ENCODE measurements at regions of chr15 and their contacts with region 1.

Region 1: DNA sequence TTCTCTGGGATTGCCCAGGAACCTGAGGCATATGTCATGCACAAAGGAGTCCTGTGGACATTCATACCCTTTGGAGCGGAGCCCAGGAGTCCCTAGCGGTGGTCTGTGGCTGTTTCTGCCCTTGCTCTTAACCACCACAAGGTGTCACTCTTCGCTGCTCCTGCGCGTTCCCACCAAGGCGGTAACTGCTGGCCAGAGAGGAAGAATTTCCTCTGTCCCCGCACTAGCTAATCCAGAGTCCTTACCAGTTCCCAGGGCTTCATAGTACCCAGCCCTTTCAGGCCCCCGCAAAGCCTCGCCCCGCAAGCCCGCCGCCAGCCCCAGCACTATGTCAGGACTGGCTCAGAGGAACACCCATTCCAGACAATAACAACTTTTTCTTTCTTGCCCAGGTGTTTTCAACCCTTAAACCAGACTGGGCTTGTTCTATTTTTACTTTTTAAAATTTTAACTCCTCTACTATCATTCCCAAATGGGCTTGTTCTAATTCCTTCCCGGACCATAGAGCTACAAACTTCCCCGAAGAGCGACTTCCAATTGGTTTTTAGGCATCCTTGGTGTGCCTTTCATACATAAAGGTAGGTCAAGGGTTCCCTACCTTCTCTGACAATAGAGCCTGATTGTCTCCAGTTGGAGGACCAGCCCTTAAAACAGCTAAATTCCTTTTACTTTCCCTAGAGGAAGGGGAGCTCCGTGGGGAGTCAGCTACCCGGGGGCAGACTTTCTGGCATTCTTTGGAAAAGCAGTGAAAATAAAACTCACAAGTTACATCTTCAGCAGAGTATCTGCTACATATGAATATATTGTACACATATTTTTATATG is 31.8 kb upstream of the ZNF774 start:
- DNase-seq: peak; percentile 80
- ATAC-seq: peak; percentile 99
- H3K4me3 Mint-ChIP-seq: peak overlapping the region; percentile 9
- H3K27ac Mint-ChIP-seq: no peak overlapping the region
- H3K4me1 Mint-ChIP-seq: peaks cover 7% of the 10 kb centered on the region
- H3K27me3 Mint-ChIP-seq: peaks cover 2% of the 10 kb centered on the region

Region 2: GRCh38 chr15:90300988-90301706 is 19.1 kb before region 1 on chr15:
- CTCF ChIA-PET with region 1: interaction called, 46 read pairs
- POLR2A ChIA-PET with region 1: no interaction called
- DNase-seq: peak; percentile 70
- ATAC-seq: peak; percentile 76
- H3K4me3 Mint-ChIP-seq: no peak overlapping the region
- H3K27ac Mint-ChIP-seq: no peak overlapping the region
- H3K4me1 Mint-ChIP-seq: peaks cover 25% of the 10 kb centered on the region
- H3K27me3 Mint-ChIP-seq: peaks cover 5% of the 10 kb centered on the region

Region 3: GRCh38 chr15:90345857-90346256 is 25.6 kb after region 1 on chr15:
- CTCF ChIA-PET with region 1: interaction called, 17 read pairs
- POLR2A ChIA-PET with region 1: no interaction called
- DNase-seq: no peak
- ATAC-seq: no peak
- H3K4me3 Mint-ChIP-seq: no peak overlapping the region
- H3K27ac Mint-ChIP-seq: no peak overlapping the region
- H3K4me1 Mint-ChIP-seq: peaks cover 22% of the 10 kb centered on the region
- H3K27me3 Mint-ChIP-seq: peaks cover 16% of the 10 kb centered on the region

Region 4: GRCh38 chr15:90412356-90413194 is 92.3 kb after region 1 on chr15:
- CTCF ChIA-PET with region 1: interaction called, 15 read pairs
- POLR2A ChIA-PET with region 1: no interaction called
- DNase-seq: peak; percentile 54
- ATAC-seq: peak; percentile 57
- H3K4me3 Mint-ChIP-seq: peak overlapping the region; percentile 37
- H3K27ac Mint-ChIP-seq: peak overlapping the region; percentile 74
- H3K4me1 Mint-ChIP-seq: peaks cover 78% of the 10 kb centered on the region
- H3K27me3 Mint-ChIP-seq: no peaks in the 10 kb centered on the region

Region 5: DNA sequence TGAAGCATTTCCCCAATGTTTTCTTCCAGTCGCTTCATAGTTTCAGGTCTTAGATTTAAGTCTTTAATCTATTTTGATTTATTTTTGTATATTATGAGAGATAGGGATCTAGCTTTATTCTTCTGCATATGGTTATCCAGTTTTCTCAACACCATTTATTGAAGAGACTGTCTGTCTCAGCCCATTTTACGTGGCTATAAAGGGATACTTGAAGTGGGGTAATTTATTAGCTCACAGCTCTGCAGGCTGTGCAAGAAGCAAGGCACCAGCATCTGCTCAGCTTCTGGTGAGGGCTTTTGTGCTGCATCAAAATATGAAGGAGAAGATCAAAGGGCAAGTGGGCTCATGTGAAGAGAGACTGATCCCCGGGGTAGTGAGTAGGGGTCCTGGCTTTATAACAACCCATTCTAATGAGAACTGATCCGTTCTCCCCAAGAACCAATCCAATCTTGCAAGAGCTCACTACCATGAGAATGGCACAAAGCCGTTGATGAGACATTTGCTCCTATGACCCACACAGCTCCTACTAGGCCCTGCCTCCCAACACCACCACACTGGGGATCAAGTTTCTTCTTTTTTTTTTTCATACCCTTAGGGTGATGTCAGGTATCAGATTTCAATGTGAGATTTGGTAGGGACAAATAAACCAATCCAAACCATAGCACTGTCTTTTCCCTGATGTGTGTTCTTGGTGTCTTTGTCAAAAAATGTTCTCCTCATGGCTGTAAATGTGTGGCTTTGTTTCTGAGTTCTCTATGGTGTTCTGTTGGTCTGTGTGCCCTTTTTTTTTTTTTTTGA is 131.0 kb after region 1 on chr15:
- CTCF ChIA-PET with region 1: interaction called, 32 read pairs
- POLR2A ChIA-PET with region 1: no interaction called
- DNase-seq: no peak
- ATAC-seq: no peak
- H3K4me3 Mint-ChIP-seq: no peak overlapping the region
- H3K27ac Mint-ChIP-seq: no peak overlapping the region
- H3K4me1 Mint-ChIP-seq: peaks cover 11% of the 10 kb centered on the region
- H3K27me3 Mint-ChIP-seq: no peaks in the 10 kb centered on the region

Region 6: DNA sequence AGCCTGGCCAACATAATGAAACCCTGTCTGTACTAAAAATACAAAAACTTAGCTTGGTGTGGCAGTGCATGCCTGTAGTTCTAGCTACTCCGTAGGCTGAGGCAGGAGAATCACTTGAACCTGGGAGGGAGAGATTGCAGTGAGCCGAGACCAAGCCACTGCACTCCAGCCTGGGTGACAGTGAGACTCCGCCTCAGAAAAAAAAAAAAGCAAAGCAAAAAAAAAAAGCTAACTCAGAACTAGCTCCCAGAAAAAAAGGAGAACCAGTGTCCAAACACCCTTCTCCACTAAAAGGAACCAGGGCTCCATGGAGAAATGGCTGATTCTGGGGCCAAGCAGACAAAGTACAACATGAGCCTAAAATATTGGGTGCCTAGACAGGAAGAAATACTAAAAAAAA is 192.7 kb after region 1 on chr15:
- CTCF ChIA-PET with region 1: interaction called, 18 read pairs
- POLR2A ChIA-PET with region 1: no interaction called
- DNase-seq: no peak
- ATAC-seq: no peak
- H3K4me3 Mint-ChIP-seq: no peak overlapping the region
- H3K27ac Mint-ChIP-seq: no peak overlapping the region
- H3K4me1 Mint-ChIP-seq: peaks cover 13% of the 10 kb centered on the region
- H3K27me3 Mint-ChIP-seq: no peaks in the 10 kb centered on the region

Region 7: DNA sequence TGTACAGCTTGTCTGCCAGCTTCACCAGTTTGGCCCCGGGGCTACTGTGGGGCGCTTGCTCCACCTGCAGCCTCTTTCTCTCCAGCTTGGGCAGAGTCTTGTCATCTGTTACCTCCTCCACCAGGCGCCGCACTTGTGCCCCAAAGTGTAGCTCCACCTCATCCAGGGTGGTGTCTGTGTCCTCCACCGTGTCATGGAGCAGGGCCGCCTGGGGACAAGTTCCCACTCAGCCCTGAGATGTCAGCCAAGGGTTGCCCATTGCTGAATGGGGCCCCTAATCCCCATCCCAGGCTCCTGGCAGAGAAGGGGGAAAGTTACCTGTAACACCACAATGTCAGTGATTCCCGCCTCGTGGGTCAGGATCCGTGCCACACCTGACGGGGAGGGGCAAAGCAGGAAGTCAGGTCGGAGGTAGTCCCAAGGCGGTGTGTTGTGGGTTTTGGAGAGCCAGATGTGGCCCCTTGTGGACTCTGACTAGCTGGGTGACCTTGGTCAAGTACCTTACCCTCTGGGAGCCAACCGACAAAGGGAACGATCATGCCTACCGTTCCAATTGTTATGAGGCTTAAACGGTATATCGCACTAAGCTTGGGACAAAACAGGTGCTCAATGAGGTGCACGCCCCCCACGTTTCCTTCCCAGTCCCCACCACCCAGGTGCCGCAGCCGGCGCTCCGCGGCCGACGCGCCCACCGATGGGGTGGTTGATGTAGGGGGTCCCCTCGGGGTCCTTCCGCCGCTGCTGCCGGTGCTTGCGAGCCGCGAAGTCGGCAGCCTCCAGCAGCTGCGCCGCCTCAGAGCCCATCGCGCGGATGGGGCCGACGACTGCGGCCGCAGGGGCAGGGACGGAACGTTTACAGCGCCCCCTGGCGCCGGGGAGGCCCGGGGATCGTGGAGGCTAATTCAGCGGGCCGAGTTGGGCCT is 611.7 kb after region 1 on chr15 and contains the start of gene HDDC3:
- CTCF ChIA-PET with region 1: interaction called, 19 read pairs
- POLR2A ChIA-PET with region 1: interaction called, 3 read pairs
- DNase-seq: peak; percentile 94
- ATAC-seq: peak; percentile 59
- H3K4me3 Mint-ChIP-seq: peak within 1 kb of the TSS; percentile 97
- H3K27ac Mint-ChIP-seq: peak within 1 kb of the TSS; percentile 99
- H3K4me1 Mint-ChIP-seq: peaks cover 63% of the 10 kb centered on the region
- H3K27me3 Mint-ChIP-seq: no peaks in the 10 kb centered on the region
- total RNA-seq, gene HDDC3: 23.8 to 26.9 TPM

Measured in activated CD8-positive, alpha-beta T cell treated with anti-CD3 and anti-CD28 coated beads, Interleukin-2, amount 10 ng/mL, durations not matched to agents 7 days and 5 days (primary cell).